HAP-1 (cell line): ENCODE measurements at regions of chr7 and their contacts with region 1.

Region 1: DNA sequence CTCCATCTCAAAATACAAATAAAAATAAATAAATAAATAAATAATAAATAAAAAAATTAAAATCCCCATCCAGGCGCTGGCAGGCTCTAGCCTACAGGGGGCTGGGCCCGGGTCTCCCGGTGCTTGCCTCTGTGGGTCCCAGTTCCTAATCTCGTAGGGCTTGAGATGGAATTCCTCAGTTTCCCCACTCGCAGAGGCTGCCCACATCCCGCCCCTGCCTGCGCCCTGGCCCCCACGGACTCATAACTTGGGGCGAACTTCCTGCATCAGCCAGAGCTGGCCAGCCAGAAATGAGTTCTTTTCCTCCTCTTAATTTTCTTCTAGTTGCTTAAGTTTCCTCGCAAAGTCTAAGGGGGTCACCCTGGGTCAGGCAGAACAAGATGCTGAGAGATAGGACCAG is 22.0 kb upstream of the SRRM3 start:
- DNase-seq: no peak
- H3K4me3 ChIP-seq: no peak overlapping the region
- H3K4me1 ChIP-seq: peaks cover 7% of the 10 kb centered on the region; the same call in 1 of the 2 replicates
- H3K27me3 ChIP-seq: no peaks in the 10 kb centered on the region

Region 2: GRCh38 chr7:76262683-76263402 is 83.2 kb after region 1 on chr7:
- in situ Hi-C with region 1: loop called (anchors 5 kb)
- DNase-seq: peak; percentile 80 to 87
- H3K4me3 ChIP-seq: no peak overlapping the region
- H3K4me1 ChIP-seq: peaks cover 7% of the 10 kb centered on the region; the same call in 1 of the 2 replicates
- H3K27me3 ChIP-seq: no peaks in the 10 kb centered on the region

Region 3: DNA sequence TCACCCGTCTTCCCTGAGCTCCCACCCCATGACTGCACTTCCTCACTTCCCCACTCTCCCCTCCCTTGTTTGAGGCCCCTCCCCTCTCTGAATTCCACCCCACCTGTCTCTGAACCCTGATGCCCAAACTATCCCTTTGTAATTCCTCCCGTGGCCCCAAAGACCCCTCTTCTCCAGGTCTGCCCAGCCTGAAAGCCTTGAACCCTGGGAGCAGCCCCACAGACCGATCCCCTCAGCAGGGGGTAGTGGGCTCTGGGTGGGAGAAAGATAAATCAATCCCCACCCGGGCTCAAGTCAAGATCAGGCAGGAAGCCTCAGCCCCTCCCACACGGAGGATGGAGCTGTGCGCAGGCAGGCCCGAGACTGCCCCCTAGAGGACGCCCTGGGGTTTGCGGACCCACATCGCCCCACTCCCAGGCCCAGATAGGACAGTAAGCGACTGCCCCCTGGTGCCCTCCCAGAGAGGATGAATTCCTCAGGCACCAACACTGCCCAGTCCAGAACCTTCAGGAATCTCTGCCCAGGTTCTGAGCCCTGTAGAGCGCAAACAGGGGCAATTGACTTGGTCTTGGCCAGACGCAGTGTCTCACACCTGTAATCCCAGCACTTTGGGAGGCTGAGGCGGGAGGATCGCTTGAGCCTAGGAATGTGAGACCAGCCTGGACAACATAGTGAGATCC is 134.5 kb after region 1 on chr7:
- in situ Hi-C with region 1: loop called (anchors 5 kb)
- DNase-seq: peak; percentile 86 to 99
- H3K4me3 ChIP-seq: 0 out of 2 replicates have a peak overlapping the region, but pooled peaks have one; percentile 5
- H3K4me1 ChIP-seq: peaks cover 8% of the 10 kb centered on the region
- H3K27me3 ChIP-seq: no peaks in the 10 kb centered on the region

Region 4: GRCh38 chr7:76364198-76364584 is 184.5 kb after region 1 on chr7:
- in situ Hi-C with region 1: no loop called
- DNase-seq: no peak
- H3K4me3 ChIP-seq: no peak overlapping the region
- H3K4me1 ChIP-seq: peaks cover 10% of the 10 kb centered on the region
- H3K27me3 ChIP-seq: no peaks in the 10 kb centered on the region